ENCODE measurements at regions of chr12 and their contacts with region 1.

Region 1: GRCh38 chr12:47715393-47715876 is 9.6 kb upstream of the RPAP3 start:
- DNase-seq: peak; percentile 84
- H3K4me3 ChIP-seq: no peak overlapping the region
- H3K27ac ChIP-seq: peak overlapping the region; percentile 5 to 93 (median 88)
- H3K4me1 ChIP-seq: peaks cover 24 to 36% (median 26%) of the 10 kb centered on the region in 4 donors
- H3K27me3 ChIP-seq: no peaks in the 10 kb centered on the region
- CTCF ChIP-seq: peak; percentile 72 to 84 (median 77)
- EP300 ChIP-seq: no peak
- POLR2A ChIP-seq: no peak

Region 2: DNA sequence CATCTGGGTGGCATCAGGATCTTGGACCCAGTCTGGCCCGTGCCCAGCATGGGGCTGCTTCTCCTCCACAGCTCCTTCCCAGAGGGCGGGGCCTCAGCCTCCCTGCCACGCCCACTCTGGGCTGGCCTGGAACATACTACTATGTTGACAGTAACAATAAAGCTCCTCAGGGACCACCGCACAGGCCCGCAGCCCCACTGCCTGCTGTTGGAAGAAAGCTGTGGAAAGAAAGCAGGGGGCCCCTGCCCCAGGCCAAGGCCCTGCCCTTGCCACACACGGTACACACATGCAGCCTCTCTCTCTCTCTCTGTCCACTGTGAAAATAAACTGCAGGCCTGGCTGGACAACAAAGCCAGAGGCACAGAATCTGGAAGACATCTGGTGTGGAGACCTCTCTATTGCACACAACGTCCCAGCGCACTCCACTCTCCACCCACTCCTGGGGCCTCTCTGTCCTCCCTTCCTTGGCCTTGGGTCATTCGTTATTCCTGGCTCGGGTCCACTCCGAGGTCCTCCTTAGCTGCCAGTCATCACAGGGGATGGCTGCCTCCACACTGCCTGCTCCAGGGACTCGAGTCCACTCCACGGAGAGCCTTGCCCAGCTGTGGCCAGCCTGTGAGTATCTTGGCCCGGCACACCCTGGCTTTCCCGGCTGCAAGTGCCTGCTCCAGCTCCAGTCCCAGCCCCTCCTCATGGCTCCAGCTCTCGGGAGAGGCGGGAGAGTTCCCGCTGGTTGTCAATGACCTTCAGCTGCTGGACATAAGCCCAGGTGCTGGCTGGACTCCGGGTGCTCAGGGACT is 21.6 kb after region 1 on chr12:
- in situ Hi-C with region 1: no loop called
- intact Hi-C with region 1: loop called (anchors 2 kb)
- DNase-seq: peak; percentile 56
- H3K4me3 ChIP-seq: no peak overlapping the region
- H3K27ac ChIP-seq: peak overlapping the region; percentile 74 to 85 (median 77)
- H3K4me1 ChIP-seq: peaks cover 24 to 55% (median 37%) of the 10 kb centered on the region in 4 donors
- H3K27me3 ChIP-seq: no peaks in the 10 kb centered on the region
- CTCF ChIP-seq: no peak
- EP300 ChIP-seq: no peak
- POLR2A ChIP-seq: no peak

Region 3: GRCh38 chr12:47779301-47779942 is 64.0 kb after region 1 on chr12:
- in situ Hi-C with region 1: loop called in 2 of 4 experiments (anchors 5 to 10 kb)
- intact Hi-C with region 1: loop called (anchors 5 kb)
- DNase-seq: peak; percentile 91
- H3K4me3 ChIP-seq: no peak overlapping the region
- H3K27ac ChIP-seq: peak overlapping the region in 1 of 4 donors; percentile 55
- H3K4me1 ChIP-seq: peaks cover 26 to 45% (median 31%) of the 10 kb centered on the region in 4 donors
- H3K27me3 ChIP-seq: no peaks in the 10 kb centered on the region
- CTCF ChIP-seq: peak; percentile 93 to 97 (median 95)
- EP300 ChIP-seq: no peak
- POLR2A ChIP-seq: no peak